Activated T-helper 2 cell treated with anti-CD3 and anti-CD28 coated beads, Interferon-gamma antibody, Interleukin-2, Interleukin-4, amounts not matched to agents 10 μg/mL and 5 μg/mL and 100 μg/mL, durations not matched to agents 14 hours and 24 hours and 36 hours (primary cell): ENCODE measurements at regions of chr3 and their contacts with region 1.

Region 1: DNA sequence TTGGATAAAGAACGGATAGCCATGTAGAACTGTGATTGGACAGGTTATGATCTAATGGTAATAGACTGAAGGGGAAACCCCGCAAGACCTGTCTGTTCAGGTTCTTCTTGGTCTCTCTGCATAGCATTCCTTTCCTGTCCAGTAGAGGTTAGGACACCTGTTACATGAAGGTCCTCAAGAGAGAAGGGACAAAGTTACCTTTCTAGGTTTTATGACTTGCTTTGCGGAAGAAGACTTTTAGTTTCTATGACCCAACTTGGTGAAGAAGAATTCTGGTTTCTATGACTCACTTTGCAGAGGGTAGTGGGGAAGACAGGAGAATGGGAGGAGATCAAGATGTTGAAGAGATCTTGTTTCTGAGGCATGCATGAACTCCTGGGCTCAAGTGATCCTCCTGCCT is 97.9 kb upstream of the C3orf80 start:
- DNase-seq: no peak
- H3K4me3 Mint-ChIP-seq: no peak overlapping the region
- H3K27ac Mint-ChIP-seq: no peak overlapping the region
- H3K4me1 Mint-ChIP-seq: peaks cover 50% of the 10 kb centered on the region
- H3K27me3 Mint-ChIP-seq: no peaks in the 10 kb centered on the region

Region 2: DNA sequence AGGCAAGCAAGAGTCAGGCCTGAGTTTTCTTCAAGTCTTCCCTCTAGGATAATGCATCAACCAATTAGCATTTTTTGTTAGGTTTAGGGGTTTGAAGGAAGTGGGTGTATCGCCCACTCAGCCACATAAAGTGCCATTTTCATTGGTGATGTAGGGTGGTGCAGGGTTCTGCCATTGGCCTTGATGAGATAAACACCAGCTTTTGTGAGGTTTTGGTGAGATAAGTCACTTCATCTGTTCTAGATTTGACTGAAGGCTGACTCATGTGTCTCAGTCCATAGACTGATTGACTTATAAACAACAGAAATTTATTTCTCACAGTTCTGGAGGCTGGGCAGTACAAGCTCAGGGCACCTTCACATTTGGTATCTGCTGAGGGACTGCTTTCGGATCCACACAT is 13.4 kb after region 1 on chr3:
- intact Hi-C with region 1: loop called (anchors 1 kb)
- DNase-seq: no peak
- H3K4me3 Mint-ChIP-seq: no peak overlapping the region
- H3K27ac Mint-ChIP-seq: no peak overlapping the region
- H3K4me1 Mint-ChIP-seq: peaks cover 15% of the 10 kb centered on the region
- H3K27me3 Mint-ChIP-seq: no peaks in the 10 kb centered on the region

Region 3: GRCh38 chr3:160302806-160303205 is 175.5 kb after region 1 on chr3:
- intact Hi-C with region 1: no loop called
- DNase-seq: no peak
- H3K4me3 Mint-ChIP-seq: no peak overlapping the region
- H3K27ac Mint-ChIP-seq: no peak overlapping the region
- H3K4me1 Mint-ChIP-seq: no peaks in the 10 kb centered on the region
- H3K27me3 Mint-ChIP-seq: no peaks in the 10 kb centered on the region

Region 4: DNA sequence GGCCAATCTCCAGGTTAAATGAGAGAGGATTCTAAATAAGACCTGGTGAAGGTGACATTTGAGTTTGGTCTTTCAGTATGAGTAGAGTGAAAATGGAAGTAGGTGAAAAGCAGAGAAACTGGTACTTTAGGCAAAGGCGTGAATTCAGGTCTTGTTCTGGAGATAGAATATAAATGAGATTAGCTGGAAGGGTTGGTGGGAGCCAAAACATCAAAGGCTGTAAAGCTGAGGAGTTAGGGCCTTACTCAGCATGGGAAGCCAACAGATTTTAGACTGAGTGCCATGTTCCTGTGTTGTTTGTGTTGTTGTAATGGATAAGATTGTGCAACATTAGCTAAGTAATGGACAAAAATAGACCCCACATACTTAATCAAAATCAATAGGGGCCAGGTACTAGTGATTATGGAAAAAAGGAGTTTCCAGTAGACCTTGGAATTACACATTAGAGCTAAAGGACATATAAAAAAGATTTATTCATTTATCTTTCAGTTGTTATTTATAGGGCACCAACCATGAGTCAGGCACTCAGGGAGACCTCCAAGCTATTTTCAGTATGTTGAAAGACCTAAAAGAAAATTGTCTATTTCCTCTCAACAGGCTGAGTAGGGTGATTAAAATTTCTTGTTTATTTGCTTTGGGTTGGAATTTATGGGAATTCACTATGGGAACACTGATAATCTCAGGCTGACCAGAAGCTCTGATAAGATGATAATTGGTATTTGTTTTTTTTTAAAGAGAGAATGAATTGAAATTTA is 570.5 kb after region 1 on chr3:
- intact Hi-C with region 1: no loop called
- DNase-seq: no peak
- H3K4me3 Mint-ChIP-seq: no peak overlapping the region
- H3K27ac Mint-ChIP-seq: no peak overlapping the region
- H3K4me1 Mint-ChIP-seq: peaks cover 4% of the 10 kb centered on the region
- H3K27me3 Mint-ChIP-seq: peaks cover 11% of the 10 kb centered on the region